CD4-positive, alpha-beta T cell (primary cell): ENCODE measurements at regions of chr9 and their contacts with region 1.

Region 1: GRCh38 chr9:21110708-21111576 is 30.7 kb downstream of the IFNW1 start:
- DNase-seq: peak in 5 of 14 experiments; percentile 10 to 84 (median 78)
- ATAC-seq: peak; percentile 89
- H3K4me3 ChIP-seq: no peak overlapping the region
- H3K4me3 Mint-ChIP-seq: no peak overlapping the region
- H3K27ac ChIP-seq: no peak overlapping the region
- H3K27ac Mint-ChIP-seq: no peak overlapping the region
- H3K4me1 ChIP-seq: no peaks in the 10 kb centered on the region
- H3K4me1 Mint-ChIP-seq: no peaks in the 10 kb centered on the region
- H3K27me3 ChIP-seq: no peaks in the 10 kb centered on the region
- H3K27me3 Mint-ChIP-seq: peaks cover 6% of the 10 kb centered on the region
- CTCF ChIP-seq: peak; percentile 92

Region 2: DNA sequence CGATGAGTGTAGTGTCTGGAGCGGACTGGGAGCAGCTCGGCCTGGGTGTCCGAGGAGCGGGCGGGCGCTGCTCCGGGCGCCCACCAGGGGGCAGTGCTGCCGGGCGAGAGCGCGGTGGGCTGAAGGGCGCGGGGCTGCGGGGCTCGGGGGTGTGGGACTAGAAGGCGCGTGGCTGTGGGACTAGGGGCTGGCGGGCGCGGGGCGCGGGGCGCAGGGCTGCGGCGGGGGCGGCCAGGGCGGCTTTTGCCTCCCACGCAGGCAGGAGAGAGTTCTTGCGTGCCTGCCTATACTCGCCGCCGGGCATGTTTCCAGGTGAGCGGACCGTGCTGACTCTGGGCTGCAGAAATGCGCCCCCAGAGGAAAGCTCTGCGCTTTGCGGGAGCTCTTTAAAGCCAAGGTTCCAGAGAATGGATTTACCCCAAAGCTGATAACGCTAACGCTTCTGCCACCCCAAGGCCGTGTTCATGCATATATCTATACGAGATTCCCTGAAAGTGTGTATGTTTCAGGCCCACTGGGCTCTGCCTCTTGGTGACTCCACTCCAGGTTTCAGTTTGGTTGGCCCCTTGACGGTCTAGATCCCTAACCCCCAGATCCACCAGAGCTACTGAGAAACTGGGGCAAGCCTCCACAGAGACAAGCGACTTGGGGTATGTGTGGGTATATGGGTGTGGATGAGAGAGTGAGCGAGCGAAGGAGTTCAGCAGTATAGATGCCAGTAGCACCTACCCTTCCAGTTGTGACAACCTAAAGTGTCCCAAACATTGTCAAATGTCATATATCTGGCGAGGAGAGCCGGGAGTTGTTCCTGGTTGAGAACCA is 1646.0 kb before region 1 on chr9:
- CTCF ChIA-PET with region 1: interaction called, 9 read pairs
- POLR2A ChIA-PET with region 1: no interaction called
- intact Hi-C with region 1: loop called in 1 of 2 experiments (anchors 10 kb)
- DNase-seq: peak; percentile 46 to 85 (median 65)
- ATAC-seq: peak; percentile 92
- H3K4me3 ChIP-seq: peak overlapping the region; percentile 36
- H3K4me3 Mint-ChIP-seq: peak overlapping the region; percentile 95
- H3K27ac ChIP-seq: no peak overlapping the region
- H3K27ac Mint-ChIP-seq: no peak overlapping the region
- H3K4me1 ChIP-seq: peaks cover 11% of the 10 kb centered on the region
- H3K4me1 Mint-ChIP-seq: no peaks in the 10 kb centered on the region
- H3K27me3 ChIP-seq: no peaks in the 10 kb centered on the region
- H3K27me3 Mint-ChIP-seq: no peaks in the 10 kb centered on the region
- CTCF ChIP-seq: peak; percentile 74

Region 3: GRCh38 chr9:19493174-19493811 is 1617.6 kb before region 1 on chr9:
- CTCF ChIA-PET with region 1: no interaction called
- POLR2A ChIA-PET with region 1: no interaction called
- intact Hi-C with region 1: loop called (anchors 5 kb)
- DNase-seq: peak in 12 of 14 experiments; percentile 2 to 65 (median 26)
- ATAC-seq: peak; percentile 73
- H3K4me3 ChIP-seq: peak overlapping the region; percentile 15
- H3K4me3 Mint-ChIP-seq: no peak overlapping the region
- H3K27ac ChIP-seq: no peak overlapping the region
- H3K27ac Mint-ChIP-seq: no peak overlapping the region
- H3K4me1 ChIP-seq: peaks cover 6% of the 10 kb centered on the region
- H3K4me1 Mint-ChIP-seq: peaks cover 9% of the 10 kb centered on the region
- H3K27me3 ChIP-seq: peaks cover 0 to 6% of the 10 kb centered on the region in 2 experiments
- H3K27me3 Mint-ChIP-seq: peaks cover 8% of the 10 kb centered on the region
- CTCF ChIP-seq: peak; percentile 73

Region 4: GRCh38 chr9:19925817-19926503 is 1185.0 kb before region 1 on chr9:
- CTCF ChIA-PET with region 1: interaction called, 8 read pairs
- POLR2A ChIA-PET with region 1: no interaction called
- intact Hi-C with region 1: loop called (anchors 1 kb)
- DNase-seq: peak; percentile 62 to 89 (median 72)
- ATAC-seq: peak; percentile 100
- H3K4me3 ChIP-seq: peak overlapping the region; percentile 21
- H3K4me3 Mint-ChIP-seq: peak overlapping the region; percentile 47
- H3K27ac ChIP-seq: no peak overlapping the region
- H3K27ac Mint-ChIP-seq: no peak overlapping the region
- H3K4me1 ChIP-seq: peaks cover 7% of the 10 kb centered on the region
- H3K4me1 Mint-ChIP-seq: peaks cover 5% of the 10 kb centered on the region
- H3K27me3 ChIP-seq: no peaks in the 10 kb centered on the region
- H3K27me3 Mint-ChIP-seq: peaks cover 15% of the 10 kb centered on the region
- CTCF ChIP-seq: peak; percentile 94

Region 5: GRCh38 chr9:20884985-20885593 is 225.9 kb before region 1 on chr9:
- CTCF ChIA-PET with region 1: interaction called, 15 read pairs
- POLR2A ChIA-PET with region 1: interaction called, 6 read pairs
- intact Hi-C with region 1: loop called (anchors 1 to 2 kb)
- DNase-seq: peak; percentile 30 to 74 (median 52)
- ATAC-seq: peak; percentile 56
- H3K4me3 ChIP-seq: no peak overlapping the region
- H3K4me3 Mint-ChIP-seq: no peak overlapping the region
- H3K27ac ChIP-seq: no peak overlapping the region
- H3K27ac Mint-ChIP-seq: no peak overlapping the region
- H3K4me1 ChIP-seq: no peaks in the 10 kb centered on the region
- H3K4me1 Mint-ChIP-seq: no peaks in the 10 kb centered on the region
- H3K27me3 ChIP-seq: no peaks in the 10 kb centered on the region
- H3K27me3 Mint-ChIP-seq: no peaks in the 10 kb centered on the region
- CTCF ChIP-seq: peak; percentile 79

Region 6: GRCh38 chr9:20941174-20941690 is 169.7 kb before region 1 on chr9:
- CTCF ChIA-PET with region 1: interaction called, 8 read pairs
- POLR2A ChIA-PET with region 1: no interaction called
- intact Hi-C with region 1: loop called (anchors 1 to 2 kb)
- DNase-seq: peak; percentile 16 to 83 (median 37)
- ATAC-seq: peak; percentile 93
- H3K4me3 ChIP-seq: no peak overlapping the region
- H3K4me3 Mint-ChIP-seq: no peak overlapping the region
- H3K27ac ChIP-seq: no peak overlapping the region
- H3K27ac Mint-ChIP-seq: no peak overlapping the region
- H3K4me1 ChIP-seq: peaks cover 2% of the 10 kb centered on the region
- H3K4me1 Mint-ChIP-seq: peaks cover 4% of the 10 kb centered on the region
- H3K27me3 ChIP-seq: no peaks in the 10 kb centered on the region
- H3K27me3 Mint-ChIP-seq: no peaks in the 10 kb centered on the region
- CTCF ChIP-seq: peak; percentile 91